CD4-positive, alpha-beta memory T cell (primary cell): ENCODE measurements at regions of chr2 and their contacts with region 1.

Region 1: GRCh38 chr2:96509114-96509846 is 4.1 kb upstream of the NEURL3 start:
- DNase-seq: peak in 3 of 5 donors; percentile 21 to 45 (median 26)
- H3K4me3 ChIP-seq: no peak overlapping the region
- H3K4me3 Mint-ChIP-seq: peak overlapping the region in 4 of 8 donors; percentile 7 to 46 (median 20)
- H3K27ac ChIP-seq: no peak overlapping the region
- H3K27ac Mint-ChIP-seq: peak overlapping the region in 2 of 7 donors; percentile 9 to 66
- H3K4me1 ChIP-seq: peaks cover 10% of the 10 kb centered on the region
- H3K4me1 Mint-ChIP-seq: peaks cover 4 to 23% (median 13%) of the 10 kb centered on the region in 4 donors
- H3K27me3 ChIP-seq: no peaks in the 10 kb centered on the region
- H3K27me3 Mint-ChIP-seq: peaks cover 1 to 12% of the 10 kb centered on the region in 2 donors

Region 2: DNA sequence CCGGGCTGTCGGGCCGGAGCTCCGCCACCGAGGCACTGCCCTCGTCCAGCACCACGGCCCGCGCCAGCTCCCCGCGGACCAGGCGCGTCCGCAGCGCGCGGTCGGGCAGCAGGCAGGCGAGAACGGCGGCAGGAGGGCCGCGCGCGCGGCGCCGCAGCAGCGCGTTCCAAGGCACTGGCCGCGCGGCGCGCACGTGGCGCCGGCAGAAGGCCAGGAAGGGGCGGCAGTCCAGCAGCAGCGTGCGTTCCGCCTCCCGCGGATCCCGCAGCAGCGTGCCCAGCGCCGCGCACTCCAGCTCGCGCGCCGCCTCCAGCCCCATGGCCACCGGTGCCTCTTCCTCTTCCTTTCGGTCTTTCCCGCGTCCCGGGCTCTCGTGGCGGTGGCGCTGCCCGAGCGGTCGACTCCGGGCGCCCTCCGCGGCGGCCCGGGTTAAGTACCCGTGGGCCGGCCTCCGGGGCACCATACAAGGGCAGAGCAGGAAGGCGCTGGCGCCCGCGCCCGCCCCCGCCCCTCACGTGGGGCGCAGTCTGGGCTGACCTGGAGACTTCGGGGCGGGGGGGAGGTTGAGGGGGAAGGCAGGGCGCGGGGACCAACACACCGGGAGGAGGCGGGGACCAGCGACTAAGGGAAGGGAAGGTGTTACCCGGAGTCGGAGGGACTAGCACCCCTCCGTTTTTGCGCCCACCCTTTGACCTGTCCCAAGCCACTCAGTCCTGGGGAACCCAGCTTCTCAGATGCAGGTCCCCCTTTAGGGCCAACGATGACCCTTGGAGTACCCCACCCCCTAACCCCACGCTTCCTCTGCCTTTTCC is 364.0 kb before region 1 on chr2 and contains the start of gene DUSP2:
- CTCF ChIA-PET with region 1: no interaction called
- POLR2A ChIA-PET with region 1: no interaction called
- intact Hi-C with region 1: loop called (anchors 2 kb)
- DNase-seq: peak; percentile 86 to 92 (median 87)
- H3K4me3 ChIP-seq: peak within 1 kb of the TSS; percentile 71 to 86
- H3K4me3 Mint-ChIP-seq: peak within 1 kb of the TSS; percentile 93 to 96 (median 94)
- H3K27ac ChIP-seq: peak within 1 kb of the TSS; percentile 100
- H3K27ac Mint-ChIP-seq: peak within 1 kb of the TSS; percentile 98 to 100 (median 99)
- H3K4me1 ChIP-seq: peaks cover 62% of the 10 kb centered on the region
- H3K4me1 Mint-ChIP-seq: peaks cover 33 to 79% (median 57%) of the 10 kb centered on the region in 4 donors
- H3K27me3 ChIP-seq: no peaks in the 10 kb centered on the region
- H3K27me3 Mint-ChIP-seq: no peaks in the 10 kb centered on the region
- total RNA-seq, gene DUSP2: 33.4 to 34.6 TPM

Region 3: GRCh38 chr2:96305091-96305978 is 203.9 kb before region 1 on chr2 and contains the start of gene SNRNP200:
- CTCF ChIA-PET with region 1: interaction called, 4 read pairs
- POLR2A ChIA-PET with region 1: no interaction called
- intact Hi-C with region 1: loop called (anchors 1 kb)
- DNase-seq: peak; percentile 91 to 95 (median 91)
- H3K4me3 ChIP-seq: peak within 1 kb of the TSS; percentile 80 to 99
- H3K4me3 Mint-ChIP-seq: peak within 1 kb of the TSS; percentile 97 to 100 (median 99)
- H3K27ac ChIP-seq: peak within 1 kb of the TSS; percentile 89
- H3K27ac Mint-ChIP-seq: peak within 1 kb of the TSS; percentile 98 to 100 (median 100)
- H3K4me1 ChIP-seq: peaks cover 48% of the 10 kb centered on the region
- H3K4me1 Mint-ChIP-seq: peaks cover 44 to 65% (median 54%) of the 10 kb centered on the region in 4 donors
- H3K27me3 ChIP-seq: no peaks in the 10 kb centered on the region
- H3K27me3 Mint-ChIP-seq: no peaks in the 10 kb centered on the region
- total RNA-seq, gene SNRNP200: 225 to 227 TPM

Region 4: GRCh38 chr2:96407041-96407918 is 102.0 kb before region 1 on chr2:
- CTCF ChIA-PET with region 1: interaction called, 97 read pairs
- POLR2A ChIA-PET with region 1: interaction called, 32 read pairs
- intact Hi-C with region 1: loop called (anchors 1 kb)
- DNase-seq: peak; percentile 86 to 89 (median 88)
- H3K4me3 ChIP-seq: peak overlapping the region; percentile 14 to 21
- H3K4me3 Mint-ChIP-seq: peak overlapping the region; percentile 64 to 91 (median 86)
- H3K27ac ChIP-seq: peak overlapping the region; percentile 39
- H3K27ac Mint-ChIP-seq: peak overlapping the region; percentile 81 to 99 (median 97)
- H3K4me1 ChIP-seq: peaks cover 34% of the 10 kb centered on the region
- H3K4me1 Mint-ChIP-seq: peaks cover 22 to 39% (median 32%) of the 10 kb centered on the region in 4 donors
- H3K27me3 ChIP-seq: no peaks in the 10 kb centered on the region
- H3K27me3 Mint-ChIP-seq: no peaks in the 10 kb centered on the region

Region 5: GRCh38 chr2:96527286-96528005 is 18.2 kb after region 1 on chr2:
- CTCF ChIA-PET with region 1: interaction called, 16 read pairs
- POLR2A ChIA-PET with region 1: interaction called, 6 read pairs
- intact Hi-C with region 1: no loop called
- DNase-seq: peak; percentile 47 to 63 (median 49)
- H3K4me3 ChIP-seq: peak overlapping the region; percentile 29 to 64
- H3K4me3 Mint-ChIP-seq: peak overlapping the region; percentile 80 to 86 (median 83)
- H3K27ac ChIP-seq: peak overlapping the region; percentile 55
- H3K27ac Mint-ChIP-seq: peak overlapping the region; percentile 68 to 93 (median 86)
- H3K4me1 ChIP-seq: peaks cover 74% of the 10 kb centered on the region
- H3K4me1 Mint-ChIP-seq: peaks cover 33 to 72% (median 54%) of the 10 kb centered on the region in 4 donors
- H3K27me3 ChIP-seq: no peaks in the 10 kb centered on the region
- H3K27me3 Mint-ChIP-seq: no peaks in the 10 kb centered on the region